ENCODE measurements at regions of chr16 and their contacts with region 1.

Region 1: DNA sequence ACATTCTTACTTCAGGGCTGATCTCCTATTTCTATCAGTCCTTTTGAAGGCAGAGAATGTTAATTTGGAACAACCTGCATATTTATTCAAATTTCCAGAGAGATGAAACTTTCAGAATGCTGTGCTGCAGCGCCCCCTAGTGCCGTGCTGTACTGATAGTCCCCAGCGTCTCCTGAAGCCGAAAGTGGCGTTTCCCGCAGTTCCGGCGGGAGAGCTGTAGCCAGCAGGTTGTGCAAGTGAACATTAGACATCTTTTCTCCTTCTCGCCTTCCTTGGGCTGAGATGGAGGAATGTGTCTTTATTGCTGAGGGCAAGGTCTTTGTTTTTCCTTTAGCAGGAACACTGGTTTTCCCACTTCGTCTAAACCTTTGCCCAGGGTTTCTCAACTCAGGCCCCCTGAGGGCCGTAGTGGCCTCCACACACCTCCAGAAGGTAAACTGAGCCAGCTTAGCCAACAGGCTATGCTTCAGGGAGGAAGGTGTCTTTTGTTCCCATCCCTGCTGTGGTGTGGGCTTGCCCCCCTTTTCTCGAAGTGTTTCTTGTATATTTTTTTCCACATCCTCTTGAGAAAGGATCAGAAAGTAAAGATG is 26.4 kb downstream of the USP10 start:
- DNase-seq: peak; percentile 98

Region 2: DNA sequence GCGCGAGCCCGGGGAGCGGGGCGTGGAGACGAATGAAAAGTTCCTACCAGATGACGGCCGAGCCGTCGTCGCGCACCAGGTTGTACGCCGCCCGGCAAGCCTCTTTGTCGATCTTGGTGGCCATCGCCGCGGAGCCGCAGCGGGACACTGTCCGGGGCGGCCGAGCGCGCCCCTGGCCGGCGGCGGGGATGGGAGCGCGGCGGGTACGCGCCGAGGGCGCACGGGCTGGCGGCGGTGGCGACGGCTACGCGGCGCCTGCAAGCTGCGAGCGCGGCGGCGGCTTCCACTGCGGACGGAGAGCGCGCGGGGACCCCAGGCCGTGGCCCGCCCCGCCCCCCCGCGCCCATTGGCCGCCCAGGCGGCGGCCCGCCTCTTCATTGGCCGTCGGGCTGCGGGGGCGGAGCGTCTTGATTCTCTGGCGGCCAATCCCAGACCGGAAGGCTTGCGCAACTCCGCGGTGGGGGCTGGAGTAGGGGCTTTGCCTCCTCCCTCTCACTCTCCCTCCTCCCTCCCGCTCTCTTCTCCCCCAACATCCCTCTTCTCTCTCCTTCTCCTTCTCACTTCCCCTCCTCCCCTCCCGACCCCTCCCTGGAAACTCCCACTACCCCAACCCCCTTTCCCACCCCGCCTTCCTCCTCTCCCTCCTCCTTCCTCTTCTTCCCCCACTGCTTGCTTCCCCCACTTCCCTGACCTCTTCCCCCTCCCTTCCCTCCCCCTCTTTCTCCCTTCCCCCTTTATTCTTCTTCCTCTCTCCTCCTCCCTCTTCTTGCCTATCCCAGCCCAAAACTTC is 108.2 kb before region 1 on chr16 and contains the start of gene COTL1:
- intact Hi-C with region 1: loop called in 1 of 2 experiments (anchors 5 kb)
- DNase-seq: peak; percentile 99
- total RNA-seq, gene COTL1: 55.0 to 66.0 TPM

Region 3: GRCh38 chr16:84672276-84673202 is 53.6 kb before region 1 on chr16:
- intact Hi-C with region 1: loop called in 1 of 2 experiments (anchors 10 kb)
- DNase-seq: peak; percentile 95

Region 4: DNA sequence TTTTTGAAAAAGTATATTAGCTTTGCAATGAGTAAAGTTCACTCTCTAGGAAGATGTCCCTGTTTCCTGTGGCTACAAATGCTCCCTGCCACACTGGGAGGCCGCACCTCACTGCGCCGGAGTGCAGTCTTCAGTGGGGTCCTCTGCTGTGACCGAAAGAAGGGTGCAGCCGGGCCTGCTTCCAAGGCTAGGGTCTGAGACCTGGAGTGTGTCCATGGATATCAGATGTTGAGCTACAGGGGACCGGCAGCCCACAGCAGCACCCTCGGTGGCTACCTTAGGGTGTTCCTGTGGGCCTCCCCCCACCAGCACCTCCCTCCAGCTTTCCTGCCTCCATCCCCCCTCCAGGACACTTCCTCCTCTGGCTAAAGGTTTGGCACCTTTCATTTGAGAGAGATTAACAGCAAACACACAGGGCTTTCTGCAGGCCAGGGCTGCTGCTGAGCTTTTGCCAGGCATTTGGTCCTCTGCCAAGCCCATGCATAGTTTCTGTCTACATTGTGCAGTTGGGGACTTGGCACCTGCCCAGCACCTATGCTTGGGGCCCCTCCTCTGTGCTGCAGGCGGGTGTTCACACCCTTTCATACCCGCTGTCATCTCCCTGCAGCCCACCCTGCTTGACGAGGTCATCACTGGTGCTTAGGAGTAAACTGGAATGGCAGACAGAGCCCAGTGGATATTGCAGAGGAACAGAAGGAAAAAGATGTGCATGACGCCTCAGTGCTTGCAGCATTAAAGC is 59.8 kb after region 1 on chr16:
- intact Hi-C with region 1: no loop called
- DNase-seq: no peak

Region 5: DNA sequence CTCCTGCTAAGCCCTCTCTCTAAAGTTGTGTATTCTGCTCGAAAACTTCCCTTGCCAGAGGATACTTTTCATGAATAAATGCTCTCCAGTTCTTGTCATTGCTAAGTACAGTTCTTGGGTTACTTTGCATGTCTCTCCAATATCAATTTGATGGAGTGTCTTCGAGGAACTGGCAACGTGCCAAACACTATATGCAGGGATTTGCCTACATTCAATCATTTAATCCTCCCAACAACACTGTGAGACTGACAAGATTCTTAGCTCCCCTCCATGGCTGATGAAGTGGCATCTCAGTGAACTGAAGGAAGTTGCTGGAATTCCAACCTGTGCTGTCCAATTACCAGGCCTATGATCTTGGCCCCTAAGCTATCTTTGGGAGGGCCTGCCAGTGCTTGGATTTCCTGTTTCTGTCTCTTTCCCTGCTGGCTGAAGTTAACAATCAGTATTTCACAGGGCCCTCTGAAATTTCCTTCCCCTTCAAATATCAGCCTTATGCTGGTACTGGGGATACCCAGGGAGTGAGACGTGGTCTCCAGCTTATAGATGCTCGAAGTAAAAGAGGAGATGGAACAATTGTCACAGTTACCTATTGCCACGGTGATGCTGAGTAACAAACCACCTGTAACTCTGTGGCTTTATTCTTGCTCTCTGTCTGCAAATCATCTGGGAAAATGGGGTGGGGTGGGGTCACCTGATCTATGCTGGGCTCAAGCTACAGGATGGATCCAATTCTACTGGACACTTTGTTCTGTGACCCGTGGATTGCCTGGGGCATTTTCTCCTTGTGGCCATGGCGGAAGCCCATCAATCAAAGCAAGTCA is 74.2 kb after region 1 on chr16:
- intact Hi-C with region 1: no loop called
- DNase-seq: no peak

Measured in posterior vena cava (tissue), 2 donors.